Activated CD4-positive, alpha-beta memory T cell treated with anti-CD3 and anti-CD28 coated beads for 36 hours (primary cell): ENCODE measurements at regions of chr13 and their contacts with region 1.

Region 1: GRCh38 chr13:31044377-31045285 is 112.2 kb downstream of the TEX26 start:
- DNase-seq: peak; percentile 91
- H3K4me3 Mint-ChIP-seq: no peak overlapping the region
- H3K27ac Mint-ChIP-seq: peak overlapping the region; percentile 93
- H3K4me1 Mint-ChIP-seq: peaks cover 48% of the 10 kb centered on the region
- H3K27me3 Mint-ChIP-seq: peaks cover 3% of the 10 kb centered on the region

Region 2: DNA sequence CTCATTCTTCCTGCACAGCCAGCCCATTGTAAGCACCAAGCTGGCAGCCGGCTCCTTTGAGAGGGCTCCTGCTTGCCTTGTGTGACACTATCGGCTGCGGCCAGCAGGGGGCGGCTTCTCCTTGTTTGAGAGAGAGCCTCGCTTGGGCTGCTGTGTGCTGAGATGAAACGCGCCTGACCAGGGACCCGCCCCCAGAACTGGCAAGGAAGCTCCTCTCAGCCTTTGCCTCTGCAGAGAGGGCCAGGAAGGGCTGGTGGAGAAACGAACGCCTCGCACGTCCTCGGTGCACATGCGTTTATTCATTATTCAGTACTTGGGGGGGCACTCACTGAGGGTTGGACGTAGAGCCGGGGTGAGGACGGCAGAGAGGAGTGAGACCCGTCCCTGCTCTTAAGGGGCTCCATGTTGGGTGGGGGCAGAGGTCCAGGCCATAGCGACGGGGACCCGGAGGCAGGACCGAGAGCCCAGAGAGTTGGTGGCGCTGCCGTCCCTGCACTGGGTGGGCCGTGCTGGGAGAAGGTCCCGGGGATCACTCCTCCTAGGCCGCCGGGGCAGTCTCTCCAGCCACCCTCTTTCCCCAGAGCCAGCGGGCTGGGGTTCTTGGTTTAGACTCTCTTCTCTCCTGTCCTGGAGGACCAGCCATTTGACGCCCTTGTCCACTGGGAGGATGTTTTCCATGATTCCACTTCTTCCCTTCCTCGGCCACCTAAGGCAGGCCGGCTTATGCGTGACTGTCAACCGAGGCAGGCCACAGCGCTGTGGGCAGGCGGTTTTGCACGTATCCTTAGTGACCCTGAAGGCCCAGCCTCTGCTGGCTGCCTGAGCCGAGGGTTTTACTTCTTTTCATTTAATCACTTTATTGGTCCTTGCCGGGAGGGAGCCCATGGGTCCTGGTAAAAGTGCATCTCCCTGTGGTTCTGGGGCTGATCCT is 911.7 kb before region 1 on chr13:
- CTCF ChIA-PET with region 1: no interaction called
- POLR2A ChIA-PET with region 1: no interaction called
- intact Hi-C with region 1: loop called (anchors 5 kb)
- DNase-seq: peak; percentile 98
- H3K4me3 Mint-ChIP-seq: no peak overlapping the region
- H3K27ac Mint-ChIP-seq: no peak overlapping the region
- H3K4me1 Mint-ChIP-seq: peaks cover 11% of the 10 kb centered on the region
- H3K27me3 Mint-ChIP-seq: no peaks in the 10 kb centered on the region

Region 3: GRCh38 chr13:30739761-30740642 is 304.6 kb before region 1 on chr13:
- CTCF ChIA-PET with region 1: interaction called, 4 read pairs
- POLR2A ChIA-PET with region 1: no interaction called
- intact Hi-C with region 1: loop called (anchors 1 kb)
- DNase-seq: peak; percentile 83
- H3K4me3 Mint-ChIP-seq: peak overlapping the region; percentile 69
- H3K27ac Mint-ChIP-seq: peak overlapping the region; percentile 87
- H3K4me1 Mint-ChIP-seq: peaks cover 76% of the 10 kb centered on the region
- H3K27me3 Mint-ChIP-seq: peaks cover 2% of the 10 kb centered on the region

Region 4: DNA sequence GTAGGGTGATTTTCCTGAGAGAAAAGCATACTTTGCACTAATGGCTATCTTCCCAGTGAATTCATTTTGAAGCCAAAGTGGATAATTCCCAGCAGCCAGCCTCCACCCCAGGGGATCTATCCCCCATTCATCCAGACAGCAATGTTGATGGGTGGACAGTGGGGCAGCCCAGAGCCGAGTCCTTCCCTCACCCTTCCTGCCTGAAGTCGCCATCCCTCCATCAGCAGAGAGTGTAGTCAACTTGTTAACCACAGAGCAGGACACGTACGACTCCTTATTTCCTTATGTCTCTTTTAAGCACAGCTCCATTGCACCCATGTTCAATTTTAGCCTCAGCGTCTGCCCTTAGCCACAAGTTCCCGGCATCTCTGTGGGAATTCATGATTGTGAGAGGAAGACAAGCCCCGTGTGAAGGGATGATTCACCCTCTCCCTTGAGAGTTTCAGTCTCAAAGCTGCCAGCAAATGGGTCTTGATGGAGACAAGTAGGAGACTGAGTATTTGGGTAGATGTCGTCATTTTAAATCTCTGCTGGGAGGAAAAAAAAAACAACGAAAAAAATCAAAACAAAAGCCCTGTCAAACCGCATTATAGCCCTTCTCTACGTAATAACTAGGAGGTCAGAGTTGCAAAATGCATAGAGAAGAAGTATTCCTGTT is 196.9 kb before region 1 on chr13:
- CTCF ChIA-PET with region 1: interaction called, 3 read pairs
- POLR2A ChIA-PET with region 1: no interaction called
- intact Hi-C with region 1: loop called (anchors 1 kb)
- DNase-seq: peak; percentile 64
- H3K4me3 Mint-ChIP-seq: no peak overlapping the region
- H3K27ac Mint-ChIP-seq: peak overlapping the region; percentile 39
- H3K4me1 Mint-ChIP-seq: peaks cover 23% of the 10 kb centered on the region
- H3K27me3 Mint-ChIP-seq: peaks cover 9% of the 10 kb centered on the region

Region 5: GRCh38 chr13:30978981-30979956 is 65.4 kb before region 1 on chr13:
- CTCF ChIA-PET with region 1: interaction called, 44 read pairs
- POLR2A ChIA-PET with region 1: no interaction called
- intact Hi-C with region 1: loop called (anchors 1 kb)
- DNase-seq: peak; percentile 57
- H3K4me3 Mint-ChIP-seq: no peak overlapping the region
- H3K27ac Mint-ChIP-seq: no peak overlapping the region
- H3K4me1 Mint-ChIP-seq: no peaks in the 10 kb centered on the region
- H3K27me3 Mint-ChIP-seq: peaks cover 7% of the 10 kb centered on the region

Region 6: DNA sequence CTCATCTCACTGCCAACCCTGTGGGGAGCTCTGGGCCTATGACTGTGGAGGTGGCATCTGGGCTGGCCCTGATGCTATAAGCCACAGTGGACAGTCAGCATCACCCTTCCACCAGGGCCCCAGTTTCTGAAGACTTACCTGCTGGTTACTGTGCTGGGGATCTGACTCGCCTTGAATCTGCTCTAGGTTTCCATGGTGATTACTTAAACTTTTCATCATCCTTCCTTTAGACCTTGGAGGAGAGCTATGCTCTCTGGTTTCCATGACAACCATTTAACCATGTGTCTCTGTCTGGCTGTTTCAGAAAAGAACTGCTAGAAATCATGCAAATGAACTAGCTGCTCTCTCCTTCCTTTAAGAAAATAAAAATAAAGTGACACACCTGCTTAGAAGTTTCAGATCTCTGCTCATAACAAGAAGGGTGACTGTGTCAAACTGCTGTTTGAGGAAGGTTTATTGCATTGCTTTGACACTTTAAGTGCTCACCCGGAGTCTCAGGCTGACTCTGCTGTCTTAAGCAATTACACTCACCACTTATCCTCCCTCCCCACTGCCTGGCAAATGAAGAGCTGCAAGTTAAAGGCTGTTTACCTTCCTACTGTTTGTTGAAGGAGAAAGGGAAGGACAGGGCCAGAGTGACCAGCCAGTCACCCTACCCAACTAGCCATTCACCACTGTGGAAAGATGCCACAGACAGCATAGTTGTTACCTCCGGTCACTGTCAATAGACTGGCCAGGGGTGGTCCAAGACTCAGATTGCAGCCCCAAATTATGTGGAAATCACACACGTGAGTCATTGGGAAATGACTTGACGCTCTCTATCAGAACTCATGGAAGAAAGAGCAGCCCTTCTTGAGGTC is 29.5 kb after region 1 on chr13:
- CTCF ChIA-PET with region 1: interaction called, 23 read pairs
- POLR2A ChIA-PET with region 1: interaction called, 8 read pairs
- intact Hi-C with region 1: loop called (anchors 1 kb)
- DNase-seq: peak; percentile 82
- H3K4me3 Mint-ChIP-seq: no peak overlapping the region
- H3K27ac Mint-ChIP-seq: peak overlapping the region; percentile 62
- H3K4me1 Mint-ChIP-seq: peaks cover 13% of the 10 kb centered on the region
- H3K27me3 Mint-ChIP-seq: peaks cover 9% of the 10 kb centered on the region